Heart left ventricle (tissue), 16 donors: ENCODE measurements at regions of chr4 and their contacts with region 1.

Region 1: DNA sequence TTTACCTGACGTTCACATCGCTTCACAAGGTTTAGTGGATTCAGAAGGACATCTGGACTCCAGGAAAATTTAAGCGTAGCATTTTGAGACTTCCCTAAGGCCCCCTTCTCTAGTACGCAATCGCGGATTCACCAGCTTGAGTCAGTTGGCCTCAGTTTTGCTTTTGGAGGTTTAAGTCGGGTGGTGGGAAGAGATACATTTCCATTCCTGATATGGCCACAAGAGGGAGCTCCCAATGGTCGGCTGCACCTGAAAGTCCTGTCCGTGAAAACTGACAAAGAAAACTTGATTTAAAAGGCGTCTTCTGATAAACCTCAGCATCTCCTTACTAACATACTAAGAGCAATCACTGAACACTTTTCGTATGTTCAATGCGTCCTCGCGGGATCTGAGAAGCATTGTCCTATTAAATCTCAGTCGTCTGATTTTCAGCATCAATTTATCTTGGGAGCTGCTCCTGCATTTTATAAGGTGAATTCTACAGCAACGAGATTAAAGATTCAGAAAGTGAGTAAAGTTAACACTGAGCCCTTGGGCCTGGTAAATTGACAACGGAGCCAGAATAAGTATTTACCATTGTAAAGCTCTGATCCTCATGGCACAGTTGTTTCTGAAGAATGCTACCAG is 50.6 kb downstream of the LGI2 start:
- DNase-seq: peak in 4 of 5 donors; percentile 51 to 73 (median 62)
- ATAC-seq: peak; percentile 39 to 73 (median 57)
- H3K4me3 ChIP-seq: peak overlapping the region in 10 of 12 donors; percentile 13 to 47 (median 39)
- H3K27ac ChIP-seq: peak overlapping the region; percentile 66 to 96 (median 87)
- H3K4me1 ChIP-seq: peaks cover 0 to 42% (median 8%) of the 10 kb centered on the region in 12 donors
- H3K27me3 ChIP-seq: no peaks in the 10 kb centered on the region
- CTCF ChIP-seq: peak; percentile 82 to 95 (median 89)
- POLR2A ChIP-seq: no peak

Region 2: DNA sequence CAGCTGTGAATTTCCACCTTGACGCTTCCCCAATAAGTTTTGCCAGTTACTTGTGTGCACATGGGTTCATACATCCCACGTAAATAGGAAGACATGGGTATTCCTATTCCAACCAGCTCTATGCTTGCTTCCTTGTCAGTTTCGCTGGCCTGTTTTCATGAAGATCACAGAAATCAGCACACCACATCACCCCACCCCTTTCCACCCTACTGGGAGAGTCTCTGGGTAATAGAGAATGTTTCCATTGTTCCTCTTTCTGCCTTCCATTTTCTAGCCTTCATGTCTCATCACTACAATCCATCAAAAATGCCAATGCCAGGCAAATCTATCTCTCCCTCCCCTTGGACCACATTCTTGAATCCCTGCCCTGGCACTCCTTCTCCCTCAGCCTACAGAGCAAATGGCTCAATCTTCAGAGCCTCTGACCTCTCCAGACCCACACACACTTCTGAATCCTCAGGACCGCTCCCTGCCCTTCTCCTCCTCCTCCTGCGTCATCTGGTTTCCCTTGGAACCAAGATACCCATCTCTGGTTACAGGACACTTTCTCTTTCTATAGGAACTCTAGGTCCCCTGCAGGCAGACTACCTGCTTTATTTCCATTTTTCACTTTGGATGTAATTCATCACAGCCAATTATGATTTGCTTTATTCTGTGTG is 719.1 kb before region 1 on chr4:
- intact Hi-C with region 1: no loop called
- DNase-seq: no peak
- ATAC-seq: no peak
- H3K4me3 ChIP-seq: no peak overlapping the region
- H3K27ac ChIP-seq: no peak overlapping the region
- H3K4me1 ChIP-seq: peaks cover 0 to 11% (median 0%) of the 10 kb centered on the region in 12 donors
- H3K27me3 ChIP-seq: no peaks in the 10 kb centered on the region
- CTCF ChIP-seq: no peak
- POLR2A ChIP-seq: no peak

Region 3: DNA sequence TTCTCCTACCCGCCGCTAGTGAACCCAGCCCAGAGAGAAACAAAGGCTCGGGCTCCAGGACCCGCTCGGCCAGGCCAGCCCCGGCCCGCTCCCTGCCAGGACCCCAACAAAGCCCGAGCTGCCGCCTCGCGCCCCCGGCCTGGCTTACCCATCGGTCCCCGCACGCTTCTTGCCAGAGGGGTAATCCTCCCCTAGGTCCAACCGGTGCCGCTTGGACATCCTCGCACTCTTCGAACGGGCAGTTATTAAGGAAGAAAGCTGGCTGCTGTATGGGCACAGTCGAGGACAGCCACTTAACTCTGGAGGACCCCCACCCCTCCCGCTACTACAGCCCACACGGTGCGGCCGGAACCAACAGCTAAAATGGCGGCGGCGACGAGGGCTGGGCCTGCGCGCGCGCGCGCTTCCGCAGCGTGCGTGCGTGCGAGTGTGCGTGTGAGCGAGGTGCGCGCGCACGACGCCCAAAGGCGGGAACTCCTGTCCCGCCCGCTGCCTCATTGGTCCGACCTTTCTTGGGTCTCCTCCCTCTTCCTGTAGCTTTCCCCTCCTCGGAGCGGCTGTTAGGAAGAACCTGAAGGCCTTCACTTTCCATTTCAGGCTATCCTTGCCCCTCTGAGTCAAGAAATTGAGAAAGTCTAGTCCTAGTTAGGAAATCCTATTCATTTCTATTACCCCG is 395.9 kb before region 1 on chr4 and contains the start of gene DHX15:
- intact Hi-C with region 1: loop called in 2 of 10 experiments (anchors 2 to 10 kb)
- DNase-seq: peak; percentile 96 to 97 (median 97)
- ATAC-seq: peak; percentile 93 to 98 (median 96)
- H3K4me3 ChIP-seq: peak within 1 kb of the TSS; percentile 73 to 100 (median 97)
- H3K27ac ChIP-seq: peak within 1 kb of the TSS; percentile 90 to 99 (median 98)
- H3K4me1 ChIP-seq: peaks cover 8 to 47% (median 31%) of the 10 kb centered on the region in 12 donors
- H3K27me3 ChIP-seq: no peaks in the 10 kb centered on the region
- CTCF ChIP-seq: no peak
- POLR2A ChIP-seq: no peak
- total RNA-seq, gene DHX15: 45.4 to 67.8 (median 58.0) TPM

Region 4: DNA sequence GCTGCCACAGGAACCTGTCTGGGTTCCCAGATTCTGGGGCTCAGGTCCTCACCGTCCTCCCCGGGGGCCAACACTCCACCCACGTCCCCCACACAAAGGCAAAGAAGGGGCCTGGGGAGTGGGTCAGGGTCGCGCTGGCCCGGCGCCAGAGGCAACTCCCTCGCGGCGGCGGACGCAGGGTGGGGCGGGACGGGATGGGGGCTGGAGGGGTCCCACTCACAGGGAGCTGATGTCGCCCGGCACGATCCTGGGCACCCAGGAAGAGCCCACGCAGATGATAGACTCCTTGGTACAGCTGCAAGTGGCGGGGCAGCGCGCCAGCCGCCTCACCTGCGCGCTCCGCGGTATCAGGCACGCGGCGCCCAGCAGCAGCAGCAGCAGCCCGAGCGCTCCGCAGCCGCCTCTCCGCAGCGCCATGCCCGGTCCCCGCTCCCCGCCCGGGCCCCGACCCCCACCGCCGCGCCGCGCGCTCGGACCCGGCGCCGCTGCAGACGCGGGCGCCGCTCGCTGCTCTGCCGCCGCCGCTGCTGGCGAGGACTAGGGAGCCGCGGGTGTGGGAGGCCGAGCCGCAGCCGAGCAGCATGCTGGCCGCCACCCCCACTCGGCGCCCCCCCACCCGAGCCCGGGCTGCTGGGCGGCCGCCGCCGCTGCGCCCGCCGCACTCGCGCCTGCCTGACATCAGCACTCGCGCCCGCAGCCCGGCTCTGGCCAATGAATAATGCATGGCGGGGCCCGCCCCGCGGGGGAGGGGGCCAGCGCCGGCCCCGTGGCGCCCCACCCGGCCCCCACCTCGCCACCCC is 50.3 kb after region 1 on chr4 and contains the start of gene LGI2:
- intact Hi-C with region 1: loop called in 1 of 10 experiments (anchors 5 kb)
- DNase-seq: peak; percentile 58 to 77 (median 67)
- ATAC-seq: peak in 3 of 4 donors; percentile 70 to 86 (median 81)
- H3K4me3 ChIP-seq: peak within 1 kb of the TSS; percentile 37 to 76 (median 61)
- H3K27ac ChIP-seq: peak within 1 kb of the TSS in 7 of 12 donors; percentile 14 to 70 (median 54)
- H3K4me1 ChIP-seq: peaks cover 0 to 16% (median 4%) of the 10 kb centered on the region in 12 donors
- H3K27me3 ChIP-seq: peaks cover 0 to 39% (median 0%) of the 10 kb centered on the region in 9 donors
- CTCF ChIP-seq: no peak
- POLR2A ChIP-seq: no peak
- total RNA-seq, gene LGI2: 0.50 to 10.6 (median 2.7) TPM

Region 5: GRCh38 chr4:25051534-25051933 is 71.4 kb after region 1 on chr4:
- intact Hi-C with region 1: loop called in 1 of 10 experiments (anchors 10 kb)
- DNase-seq: no peak
- ATAC-seq: no peak
- H3K4me3 ChIP-seq: no peak overlapping the region
- H3K27ac ChIP-seq: no peak overlapping the region
- H3K4me1 ChIP-seq: no peaks in the 10 kb centered on the region
- H3K27me3 ChIP-seq: no peaks in the 10 kb centered on the region
- CTCF ChIP-seq: no peak
- POLR2A ChIP-seq: no peak

Region 6: DNA sequence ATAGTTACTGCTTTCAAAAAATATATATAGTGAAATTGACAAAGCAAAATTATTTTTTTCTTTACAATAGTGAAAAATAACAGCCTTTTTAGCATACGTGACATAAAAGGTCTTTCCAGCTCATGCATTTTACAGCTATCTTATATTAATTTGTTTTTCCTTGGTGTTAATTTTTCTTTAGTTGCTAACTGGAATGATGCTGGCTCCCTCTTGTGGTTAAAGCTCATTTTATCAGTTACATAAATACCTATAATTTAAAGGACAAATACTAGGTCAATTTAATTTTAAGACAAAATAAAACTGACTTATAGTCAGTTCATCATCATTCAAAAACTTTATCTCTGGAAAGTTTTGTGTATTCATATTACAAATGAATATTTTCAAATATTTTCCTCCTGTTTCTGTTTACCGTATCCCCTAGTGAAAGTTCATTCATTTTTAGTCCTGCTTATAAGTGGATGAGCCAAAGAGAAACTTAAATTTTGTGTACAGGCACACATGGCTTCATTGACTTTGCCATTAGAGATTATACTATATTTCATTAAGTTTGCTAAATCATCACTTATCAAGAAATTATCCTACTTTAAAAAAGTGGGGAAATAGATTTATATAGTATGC is 386.9 kb after region 1 on chr4:
- intact Hi-C with region 1: loop called in 1 of 10 experiments (anchors 10 kb)
- DNase-seq: no peak
- ATAC-seq: no peak
- H3K4me3 ChIP-seq: no peak overlapping the region
- H3K27ac ChIP-seq: no peak overlapping the region
- H3K4me1 ChIP-seq: no peaks in the 10 kb centered on the region
- H3K27me3 ChIP-seq: no peaks in the 10 kb centered on the region
- CTCF ChIP-seq: peak; percentile 30 to 73 (median 60)
- POLR2A ChIP-seq: no peak